ENCODE measurements at regions of chr15 and their contacts with region 1.

Region 1: GRCh38 chr15:74781431-74782258 is at the start of gene CSK:
- DNase-seq: no peak
- ATAC-seq: peak; percentile 88
- H3K4me3 ChIP-seq: peak within 1 kb of the TSS; percentile 87 to 90
- H3K27ac ChIP-seq: peak within 1 kb of the TSS; percentile 87
- H3K4me1 ChIP-seq: peaks cover 43% of the 10 kb centered on the region
- H3K27me3 ChIP-seq: no peaks in the 10 kb centered on the region
- CTCF ChIP-seq: peak; percentile 99
- total RNA-seq, gene CSK: 81.4 TPM

Region 2: GRCh38 chr15:73240866-73241499 is 1540.7 kb before region 1 on chr15:
- CTCF ChIA-PET with region 1: no interaction called
- POLR2A ChIA-PET with region 1: no interaction called
- in situ Hi-C with region 1: no loop called
- intact Hi-C with region 1: no loop called
- DNase-seq: no peak
- ATAC-seq: no peak; the same call in 1 of the 2 replicates
- H3K4me3 ChIP-seq: no peak overlapping the region
- H3K27ac ChIP-seq: no peak overlapping the region
- H3K4me1 ChIP-seq: no peaks in the 10 kb centered on the region
- H3K27me3 ChIP-seq: peaks cover 4% of the 10 kb centered on the region; the same call in 1 of the 2 replicates
- CTCF ChIP-seq: peak; percentile 83

Region 3: GRCh38 chr15:74835307-74835823 is 53.7 kb after region 1 on chr15:
- CTCF ChIA-PET with region 1: no interaction called
- POLR2A ChIA-PET with region 1: no interaction called
- in situ Hi-C with region 1: no loop called
- intact Hi-C with region 1: loop called (anchors 10 kb)
- DNase-seq: no peak
- ATAC-seq: peak; percentile 76
- H3K4me3 ChIP-seq: no peak overlapping the region
- H3K27ac ChIP-seq: no peak overlapping the region
- H3K4me1 ChIP-seq: no peaks in the 10 kb centered on the region; the same call in 1 of the 2 replicates
- H3K27me3 ChIP-seq: no peaks in the 10 kb centered on the region
- CTCF ChIP-seq: peak; percentile 94

Region 4: GRCh38 chr15:74956648-74957300 is 175.1 kb after region 1 on chr15 and contains the start of gene RPP25:
- CTCF ChIA-PET with region 1: no interaction called
- POLR2A ChIA-PET with region 1: no interaction called
- in situ Hi-C with region 1: no loop called
- intact Hi-C with region 1: loop called (anchors 10 kb)
- DNase-seq: peak; percentile 80
- ATAC-seq: peak; percentile 90
- H3K4me3 ChIP-seq: peak within 1 kb of the TSS; percentile 79 to 96
- H3K27ac ChIP-seq: peak within 1 kb of the TSS; percentile 96
- H3K4me1 ChIP-seq: peaks cover 36% of the 10 kb centered on the region
- H3K27me3 ChIP-seq: no peaks in the 10 kb centered on the region
- CTCF ChIP-seq: no peak
- total RNA-seq, gene RPP25: 40.1 TPM